ENCODE measurements at regions of chr12 and their contacts with region 1.

Region 1: DNA sequence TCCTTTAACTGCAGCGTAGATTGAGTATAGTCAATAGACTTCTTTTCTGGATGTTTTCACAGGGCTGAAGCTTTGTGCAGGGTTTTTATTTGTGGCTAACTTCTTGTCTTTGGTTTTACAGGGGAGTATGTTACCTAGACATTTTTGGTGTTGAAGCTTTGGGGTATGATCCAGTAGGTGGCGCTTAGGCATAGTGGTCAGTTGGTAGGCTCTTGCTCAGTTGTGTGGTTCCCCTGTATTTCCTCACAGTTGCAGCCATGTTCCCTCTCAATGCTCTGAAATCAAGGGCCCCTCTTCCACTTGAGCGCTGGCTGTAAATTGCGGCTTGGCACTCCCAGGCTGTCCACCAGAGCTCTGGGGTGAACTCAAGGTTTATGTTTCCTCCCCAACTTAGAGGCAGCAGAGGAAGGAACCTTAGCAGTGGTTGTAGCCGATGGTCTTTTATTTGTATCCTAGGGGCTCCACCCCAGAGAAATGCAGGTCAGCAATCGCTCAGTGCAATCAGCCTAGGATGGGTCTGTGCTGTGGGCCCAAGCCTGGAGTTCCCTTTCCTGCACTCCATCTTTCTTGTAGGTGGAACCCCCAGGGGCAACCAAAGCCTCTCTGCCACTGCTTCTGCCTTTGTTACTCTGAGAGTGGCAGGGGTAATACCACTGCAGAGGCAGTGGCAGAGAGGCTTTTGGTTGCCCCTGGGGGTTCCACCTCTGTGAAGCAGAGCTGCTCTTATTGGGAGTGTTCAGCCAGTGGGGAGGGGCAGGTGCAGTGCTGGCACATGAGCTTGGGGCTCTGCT is 55.1 kb downstream of the CMAS start:
- DNase-seq: peak in 4 of 5 donors; percentile 45 to 55 (median 47)
- H3K4me3 ChIP-seq: no peak overlapping the region
- H3K4me3 Mint-ChIP-seq: peak overlapping the region in 1 of 8 donors; percentile 32
- H3K27ac ChIP-seq: no peak overlapping the region
- H3K27ac Mint-ChIP-seq: peak overlapping the region in 1 of 7 donors; percentile 13
- H3K4me1 ChIP-seq: peaks cover 14% of the 10 kb centered on the region
- H3K4me1 Mint-ChIP-seq: peaks cover 7 to 17% (median 13%) of the 10 kb centered on the region in 4 donors
- H3K27me3 ChIP-seq: no peaks in the 10 kb centered on the region
- H3K27me3 Mint-ChIP-seq: no peaks in the 10 kb centered on the region

Region 2: DNA sequence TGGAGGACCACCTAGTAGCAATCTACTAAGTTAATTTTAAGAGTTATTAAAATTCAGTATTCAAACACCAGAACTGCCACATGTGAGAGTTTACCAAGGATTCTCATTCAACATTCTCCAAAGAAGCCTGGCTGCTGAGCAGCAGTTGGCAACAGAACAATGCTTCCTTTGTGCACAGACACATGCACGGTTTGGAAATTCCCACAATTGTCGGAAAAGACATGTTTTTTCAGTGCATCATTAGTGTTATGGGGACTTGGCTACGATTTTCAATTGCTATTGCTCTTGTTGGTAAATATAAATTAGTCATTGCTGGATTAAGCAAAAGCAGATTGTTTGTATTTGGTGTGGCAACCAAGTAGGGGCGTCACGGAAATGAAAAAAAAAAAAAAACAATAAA is 211.2 kb after region 1 on chr12:
- CTCF ChIA-PET with region 1: no interaction called
- POLR2A ChIA-PET with region 1: no interaction called
- intact Hi-C with region 1: no loop called
- DNase-seq: no peak
- H3K4me3 ChIP-seq: no peak overlapping the region
- H3K4me3 Mint-ChIP-seq: peak overlapping the region in 1 of 8 donors; percentile 6
- H3K27ac ChIP-seq: no peak overlapping the region
- H3K27ac Mint-ChIP-seq: no peak overlapping the region
- H3K4me1 ChIP-seq: peaks cover 8% of the 10 kb centered on the region
- H3K4me1 Mint-ChIP-seq: peaks cover 19 to 48% (median 36%) of the 10 kb centered on the region in 4 donors
- H3K27me3 ChIP-seq: no peaks in the 10 kb centered on the region
- H3K27me3 Mint-ChIP-seq: no peaks in the 10 kb centered on the region

Region 3: DNA sequence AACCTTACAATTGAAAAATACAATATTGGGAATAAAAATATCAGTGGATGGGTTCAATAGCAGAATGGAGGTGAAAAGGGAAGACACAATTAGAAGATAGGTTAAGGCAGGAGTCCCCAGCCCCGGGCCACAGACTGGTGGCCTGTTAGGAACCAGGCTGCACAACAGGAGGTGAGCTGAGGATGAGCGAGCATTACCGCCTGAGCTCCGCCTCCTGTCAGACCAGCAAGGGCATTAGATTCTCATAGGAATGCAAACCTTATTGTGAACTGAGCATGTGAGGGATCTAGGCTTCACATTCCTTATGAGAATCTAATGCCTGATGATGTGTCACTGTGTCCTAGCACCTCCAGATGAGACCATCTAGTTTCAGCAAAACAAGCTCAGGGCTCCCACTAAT is 260.6 kb after region 1 on chr12:
- CTCF ChIA-PET with region 1: no interaction called
- POLR2A ChIA-PET with region 1: no interaction called
- intact Hi-C with region 1: loop called (anchors 1 kb)
- DNase-seq: no peak
- H3K4me3 ChIP-seq: no peak overlapping the region
- H3K4me3 Mint-ChIP-seq: no peak overlapping the region
- H3K27ac ChIP-seq: no peak overlapping the region
- H3K27ac Mint-ChIP-seq: no peak overlapping the region
- H3K4me1 ChIP-seq: no peaks in the 10 kb centered on the region
- H3K4me1 Mint-ChIP-seq: no peaks in the 10 kb centered on the region
- H3K27me3 ChIP-seq: no peaks in the 10 kb centered on the region
- H3K27me3 Mint-ChIP-seq: no peaks in the 10 kb centered on the region

Measured in CD4-positive, alpha-beta memory T cell (primary cell).